Activated naive CD8-positive, alpha-beta T cell treated with anti-CD3 and anti-CD28 coated beads, Interleukin-2, amount 10 ng/mL, durations not matched to agents 7 days and 5 days (primary cell): ENCODE measurements at regions of chr20 and their contacts with region 1.

Region 1: GRCh38 chr20:36835453-36836198 is 40.3 kb upstream of the TLDC2 start:
- DNase-seq: peak; percentile 87
- ATAC-seq: peak; percentile 96
- H3K4me3 Mint-ChIP-seq: peak overlapping the region; percentile 90
- H3K27ac Mint-ChIP-seq: peak overlapping the region; percentile 91
- H3K4me1 Mint-ChIP-seq: peaks cover 19% of the 10 kb centered on the region
- H3K27me3 Mint-ChIP-seq: no peaks in the 10 kb centered on the region

Region 2: GRCh38 chr20:36717657-36718056 is 118.0 kb before region 1 on chr20:
- POLR2A ChIA-PET with region 1: no interaction called
- DNase-seq: no peak
- ATAC-seq: peak; percentile 30
- H3K4me3 Mint-ChIP-seq: no peak overlapping the region
- H3K27ac Mint-ChIP-seq: no peak overlapping the region
- H3K4me1 Mint-ChIP-seq: peaks cover 11% of the 10 kb centered on the region
- H3K27me3 Mint-ChIP-seq: no peaks in the 10 kb centered on the region

Region 3: DNA sequence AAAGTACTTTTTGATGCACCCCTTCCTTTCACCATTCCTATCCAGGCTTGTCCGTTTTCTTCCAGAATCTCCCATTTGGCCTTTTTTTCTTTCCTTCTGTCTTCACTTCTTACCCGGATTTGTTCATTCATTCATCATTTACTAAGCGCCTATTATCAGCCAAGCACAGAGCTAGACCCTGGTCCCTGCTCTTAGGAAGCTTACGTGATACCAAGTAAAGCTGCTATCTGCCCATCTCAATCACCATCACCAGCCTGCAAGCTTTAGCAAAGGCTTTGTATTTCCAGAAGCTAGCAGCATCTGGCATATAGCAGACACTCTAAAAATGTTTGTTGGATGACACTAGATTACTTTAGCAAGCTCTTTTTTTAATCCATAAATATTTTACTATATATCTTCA is 94.6 kb before region 1 on chr20:
- POLR2A ChIA-PET with region 1: no interaction called
- DNase-seq: no peak
- ATAC-seq: no peak
- H3K4me3 Mint-ChIP-seq: no peak overlapping the region
- H3K27ac Mint-ChIP-seq: no peak overlapping the region
- H3K4me1 Mint-ChIP-seq: peaks cover 17% of the 10 kb centered on the region
- H3K27me3 Mint-ChIP-seq: no peaks in the 10 kb centered on the region

Region 4: DNA sequence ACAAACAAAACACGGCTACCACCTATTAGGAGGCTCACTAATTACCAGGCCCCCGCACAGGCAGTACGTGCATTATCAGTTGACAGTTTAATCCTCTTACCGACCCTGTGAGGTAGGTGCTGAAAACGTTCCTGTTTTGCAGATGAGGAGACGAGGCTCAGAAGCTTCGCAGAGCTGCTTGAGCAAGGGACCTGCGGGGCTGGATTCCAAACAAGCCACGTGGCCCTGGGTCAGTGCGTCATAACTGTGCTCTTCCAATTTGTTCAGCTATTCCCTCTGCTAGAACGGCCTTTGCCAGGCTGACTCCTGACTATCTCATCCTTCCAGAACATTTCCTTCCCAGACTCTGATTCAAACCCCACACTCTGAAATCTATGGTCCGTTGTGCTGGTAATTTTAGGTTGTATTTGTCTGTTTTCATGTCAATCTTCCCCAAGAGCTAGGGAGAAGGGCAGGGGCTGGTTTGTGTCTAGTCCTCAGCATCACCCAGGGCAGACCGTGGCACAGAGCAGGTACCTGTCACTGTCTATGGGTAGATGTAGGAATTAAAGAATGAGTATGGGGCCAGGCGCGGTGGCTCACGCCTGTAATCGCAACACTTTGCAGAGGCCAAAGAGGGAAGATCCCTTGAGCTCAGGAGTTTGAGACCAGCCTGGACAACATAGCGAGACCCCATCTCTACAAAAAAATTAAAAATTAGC is 11.5 kb after region 1 on chr20:
- POLR2A ChIA-PET with region 1: interaction called, 12 read pairs
- DNase-seq: no peak
- ATAC-seq: no peak
- H3K4me3 Mint-ChIP-seq: no peak overlapping the region
- H3K27ac Mint-ChIP-seq: peak overlapping the region; percentile 36
- H3K4me1 Mint-ChIP-seq: peaks cover 15% of the 10 kb centered on the region
- H3K27me3 Mint-ChIP-seq: no peaks in the 10 kb centered on the region

Region 5: DNA sequence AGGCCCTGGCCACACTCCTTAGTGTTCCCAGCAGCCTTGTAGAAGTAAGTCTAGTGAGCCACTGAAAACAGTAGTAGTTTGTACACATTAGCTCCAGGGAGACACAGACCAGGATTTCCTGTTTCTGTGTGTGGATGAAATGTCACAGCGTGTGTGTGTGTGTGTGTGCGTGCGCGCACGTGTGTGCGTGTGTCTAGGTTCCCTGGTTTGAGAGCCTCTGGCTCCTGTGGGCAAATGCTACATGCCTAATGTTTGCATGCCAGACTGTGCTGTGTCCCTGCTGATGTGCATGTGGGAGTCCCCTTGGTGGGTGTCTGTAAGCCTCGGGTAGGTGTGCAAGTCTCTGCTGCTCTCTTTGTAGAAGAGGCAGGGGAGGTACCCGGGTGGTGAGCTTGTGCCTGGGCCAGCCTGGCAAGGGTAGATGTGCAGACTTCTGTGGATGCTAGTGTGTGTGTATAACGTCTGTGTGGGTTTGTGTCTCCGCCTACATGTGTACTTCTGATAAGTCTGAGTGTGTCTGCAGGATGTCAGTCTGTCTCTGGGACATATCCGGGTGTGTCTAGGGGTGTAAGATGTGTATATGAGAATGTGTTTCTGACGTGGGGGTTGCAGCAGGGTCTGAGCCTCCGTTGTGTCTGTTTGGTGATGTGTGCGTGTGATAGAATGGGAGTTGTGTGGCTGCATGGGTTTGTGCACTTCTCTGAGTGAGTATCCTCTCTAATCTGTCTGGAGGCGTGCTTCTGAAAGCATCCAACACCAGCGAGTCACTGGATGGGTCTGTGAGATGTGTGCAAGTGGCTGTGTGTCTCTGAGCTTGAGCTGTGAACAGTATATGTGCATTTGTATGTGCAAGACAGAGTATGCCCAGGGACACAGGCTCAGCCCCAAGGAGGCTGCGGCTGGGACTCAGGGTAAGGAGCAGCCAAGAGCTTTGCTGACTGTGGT is 21.3 kb after region 1 on chr20:
- POLR2A ChIA-PET with region 1: interaction called, 33 read pairs
- DNase-seq: peak; percentile 69
- ATAC-seq: peak; percentile 75
- H3K4me3 Mint-ChIP-seq: peak overlapping the region; percentile 30
- H3K27ac Mint-ChIP-seq: peak overlapping the region; percentile 82
- H3K4me1 Mint-ChIP-seq: peaks cover 15% of the 10 kb centered on the region
- H3K27me3 Mint-ChIP-seq: peaks cover 7% of the 10 kb centered on the region

Region 6: GRCh38 chr20:36861875-36862801 is 26.5 kb after region 1 on chr20:
- POLR2A ChIA-PET with region 1: interaction called, 33 read pairs
- DNase-seq: no peak
- ATAC-seq: no peak
- H3K4me3 Mint-ChIP-seq: peak overlapping the region; percentile 36
- H3K27ac Mint-ChIP-seq: no peak overlapping the region
- H3K4me1 Mint-ChIP-seq: peaks cover 10% of the 10 kb centered on the region
- H3K27me3 Mint-ChIP-seq: peaks cover 25% of the 10 kb centered on the region